Activated CD4-positive, alpha-beta T cell treated with anti-CD3 and anti-CD28 coated beads for 36 hours (primary cell): ENCODE measurements at regions of chr9 and their contacts with region 1.

Region 1: DNA sequence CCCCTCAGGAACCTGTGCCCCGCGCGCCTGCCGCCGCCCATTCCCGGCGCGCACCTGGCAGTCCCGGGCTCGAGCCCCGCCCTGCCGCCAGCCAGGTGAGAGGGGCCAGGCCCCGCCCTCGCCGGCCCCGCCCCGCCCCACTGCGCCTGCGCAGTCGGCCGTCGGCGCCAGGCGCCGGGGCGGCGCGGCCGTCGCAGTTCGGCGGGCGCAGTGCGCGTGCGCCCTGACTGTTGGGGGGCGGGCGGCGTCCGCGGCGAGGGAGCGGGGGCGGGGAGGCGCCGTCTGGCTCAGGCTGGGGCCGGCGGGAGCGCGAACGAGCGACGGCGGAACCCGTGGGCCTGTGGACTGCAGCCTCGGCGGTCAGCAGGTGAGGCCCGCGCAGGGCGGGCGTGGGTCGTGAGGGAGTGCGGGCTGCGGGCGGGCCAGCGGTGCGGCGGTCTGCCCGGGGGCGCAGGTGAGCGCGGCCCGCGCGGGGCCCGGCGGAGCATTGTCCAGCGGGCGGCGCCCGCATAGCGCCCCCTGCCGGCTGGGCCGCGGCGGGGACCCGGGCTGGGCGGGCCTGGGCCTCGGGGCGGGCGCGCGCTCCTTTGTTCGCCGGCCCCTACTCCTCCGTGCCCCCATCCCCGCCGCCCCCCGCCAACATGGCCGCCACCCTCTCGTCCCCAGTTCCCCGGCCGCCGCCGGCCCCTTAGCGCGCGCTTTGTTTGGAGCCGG is at the start of gene SPIN1:
- DNase-seq: peak; percentile 92
- ATAC-seq: peak; percentile 83
- H3K4me3 Mint-ChIP-seq: peak within 1 kb of the TSS; percentile 94
- H3K27ac Mint-ChIP-seq: peak within 1 kb of the TSS; percentile 97
- H3K4me1 Mint-ChIP-seq: peaks cover 40% of the 10 kb centered on the region
- H3K27me3 Mint-ChIP-seq: no peaks in the 10 kb centered on the region
- total RNA-seq, gene SPIN1: 17.9 to 22.1 TPM

Region 2: DNA sequence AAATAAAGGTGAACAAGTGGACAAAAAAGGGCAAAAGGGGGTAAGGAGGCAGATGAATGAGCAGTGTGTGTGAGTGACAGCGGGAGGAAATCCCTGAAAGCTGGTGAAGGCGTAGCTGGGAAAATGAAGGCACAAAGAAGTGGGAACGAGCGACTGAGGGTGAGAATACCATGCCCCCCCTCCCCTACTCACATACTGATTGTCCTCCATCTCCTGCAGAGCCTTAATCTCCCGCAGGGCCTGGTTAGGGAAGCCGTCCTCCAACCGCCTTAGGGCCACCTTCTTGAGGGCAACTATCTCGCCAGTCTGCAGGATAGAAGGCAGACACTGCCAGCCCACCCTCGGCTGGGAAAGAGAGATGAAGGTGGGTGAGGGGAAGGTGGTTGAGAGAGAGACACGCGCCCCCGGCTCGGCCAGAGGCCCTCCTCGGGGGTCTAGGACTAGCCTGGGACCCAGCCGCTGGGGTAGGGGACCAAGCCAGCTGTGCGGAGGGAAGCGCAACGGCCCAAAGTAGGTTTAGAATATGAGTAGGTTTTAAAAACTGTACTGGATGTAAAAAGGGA is 414.5 kb before region 1 on chr9:
- CTCF ChIA-PET with region 1: interaction called, 3 read pairs
- POLR2A ChIA-PET with region 1: no interaction called
- intact Hi-C with region 1: loop called in 1 of 2 experiments (anchors 1 kb)
- DNase-seq: peak; percentile 19
- ATAC-seq: no peak
- H3K4me3 Mint-ChIP-seq: peak overlapping the region; percentile 82
- H3K27ac Mint-ChIP-seq: peak overlapping the region; percentile 58
- H3K4me1 Mint-ChIP-seq: peaks cover 22% of the 10 kb centered on the region
- H3K27me3 Mint-ChIP-seq: no peaks in the 10 kb centered on the region

Region 3: GRCh38 chr9:88173378-88173999 is 214.8 kb before region 1 on chr9:
- CTCF ChIA-PET with region 1: no interaction called
- POLR2A ChIA-PET with region 1: no interaction called
- intact Hi-C with region 1: loop called (anchors 2 to 10 kb)
- DNase-seq: peak; percentile 67
- ATAC-seq: peak; percentile 55
- H3K4me3 Mint-ChIP-seq: no peak overlapping the region
- H3K27ac Mint-ChIP-seq: no peak overlapping the region
- H3K4me1 Mint-ChIP-seq: peaks cover under 1% of the 10 kb centered on the region
- H3K27me3 Mint-ChIP-seq: peaks cover 4% of the 10 kb centered on the region

Region 4: GRCh38 chr9:88310310-88310995 is 77.9 kb before region 1 on chr9:
- CTCF ChIA-PET with region 1: interaction called, 5 read pairs
- POLR2A ChIA-PET with region 1: no interaction called
- intact Hi-C with region 1: loop called (anchors 2 to 5 kb)
- DNase-seq: no peak
- ATAC-seq: no peak
- H3K4me3 Mint-ChIP-seq: no peak overlapping the region
- H3K27ac Mint-ChIP-seq: peak overlapping the region; percentile 25
- H3K4me1 Mint-ChIP-seq: peaks cover 31% of the 10 kb centered on the region
- H3K27me3 Mint-ChIP-seq: peaks cover 6% of the 10 kb centered on the region

Region 5: DNA sequence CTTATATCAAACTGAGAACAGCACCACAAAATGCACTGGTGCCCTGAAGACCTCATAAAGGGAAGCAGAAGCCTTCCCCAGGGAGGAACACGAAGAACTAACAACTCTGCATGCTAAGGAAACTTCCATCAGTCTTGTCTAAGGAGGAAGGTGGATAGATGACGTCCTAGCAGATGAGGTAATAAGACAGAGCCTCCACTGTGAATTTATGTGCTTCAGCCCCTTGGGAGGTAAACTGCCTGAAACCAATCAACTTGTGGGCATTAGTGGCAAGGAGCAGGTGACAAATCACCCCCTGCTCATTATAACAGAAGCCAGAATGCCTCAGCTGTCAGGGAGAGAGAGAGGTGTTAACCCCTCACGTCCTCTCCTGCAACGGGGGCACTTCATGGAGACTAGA is 49.0 kb before region 1 on chr9:
- CTCF ChIA-PET with region 1: no interaction called
- POLR2A ChIA-PET with region 1: no interaction called
- intact Hi-C with region 1: no loop called
- DNase-seq: no peak
- ATAC-seq: no peak
- H3K4me3 Mint-ChIP-seq: no peak overlapping the region
- H3K27ac Mint-ChIP-seq: no peak overlapping the region
- H3K4me1 Mint-ChIP-seq: no peaks in the 10 kb centered on the region
- H3K27me3 Mint-ChIP-seq: no peaks in the 10 kb centered on the region

Region 6: DNA sequence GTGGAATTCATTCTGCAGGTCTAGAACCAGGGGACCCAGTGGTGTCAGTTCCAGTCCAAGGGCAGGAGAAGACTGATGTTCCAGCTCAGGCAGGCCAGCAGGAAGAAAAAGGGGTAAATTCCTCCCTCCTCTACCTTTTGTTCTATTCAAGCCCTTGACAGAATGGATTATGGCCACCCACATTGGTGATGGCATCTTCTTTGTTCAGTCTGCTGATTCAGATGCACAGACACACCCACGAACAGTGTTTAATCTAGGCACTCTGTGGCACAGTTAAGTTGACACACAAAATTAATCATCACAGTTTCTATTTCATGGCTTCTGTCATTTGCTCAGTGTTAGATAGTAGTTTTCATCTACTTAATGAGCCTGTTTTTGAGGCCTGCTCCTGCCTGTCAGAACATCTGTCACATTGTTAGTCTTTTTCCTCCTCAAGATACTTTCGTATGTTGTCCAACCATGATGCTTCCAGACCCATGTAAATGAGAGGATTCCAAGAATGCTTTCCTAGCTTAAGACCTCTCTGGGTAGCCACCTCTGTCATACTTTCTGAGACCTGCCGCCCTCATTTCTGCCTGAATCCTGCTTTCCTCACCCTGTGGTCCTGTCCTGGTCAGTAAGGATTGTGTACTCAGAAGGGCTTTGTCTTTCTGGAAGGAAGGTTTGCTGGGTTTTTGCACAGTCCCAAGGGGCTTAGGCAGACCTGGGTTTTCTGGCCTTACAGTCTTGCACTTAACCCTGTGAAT is 72.4 kb after region 1 on chr9:
- CTCF ChIA-PET with region 1: no interaction called
- POLR2A ChIA-PET with region 1: no interaction called
- intact Hi-C with region 1: loop called in 1 of 2 experiments (anchors 1 kb)
- DNase-seq: peak; percentile 57
- ATAC-seq: peak; percentile 98
- H3K4me3 Mint-ChIP-seq: no peak overlapping the region
- H3K27ac Mint-ChIP-seq: peak overlapping the region; percentile 48
- H3K4me1 Mint-ChIP-seq: peaks cover 12% of the 10 kb centered on the region
- H3K27me3 Mint-ChIP-seq: no peaks in the 10 kb centered on the region

Region 7: DNA sequence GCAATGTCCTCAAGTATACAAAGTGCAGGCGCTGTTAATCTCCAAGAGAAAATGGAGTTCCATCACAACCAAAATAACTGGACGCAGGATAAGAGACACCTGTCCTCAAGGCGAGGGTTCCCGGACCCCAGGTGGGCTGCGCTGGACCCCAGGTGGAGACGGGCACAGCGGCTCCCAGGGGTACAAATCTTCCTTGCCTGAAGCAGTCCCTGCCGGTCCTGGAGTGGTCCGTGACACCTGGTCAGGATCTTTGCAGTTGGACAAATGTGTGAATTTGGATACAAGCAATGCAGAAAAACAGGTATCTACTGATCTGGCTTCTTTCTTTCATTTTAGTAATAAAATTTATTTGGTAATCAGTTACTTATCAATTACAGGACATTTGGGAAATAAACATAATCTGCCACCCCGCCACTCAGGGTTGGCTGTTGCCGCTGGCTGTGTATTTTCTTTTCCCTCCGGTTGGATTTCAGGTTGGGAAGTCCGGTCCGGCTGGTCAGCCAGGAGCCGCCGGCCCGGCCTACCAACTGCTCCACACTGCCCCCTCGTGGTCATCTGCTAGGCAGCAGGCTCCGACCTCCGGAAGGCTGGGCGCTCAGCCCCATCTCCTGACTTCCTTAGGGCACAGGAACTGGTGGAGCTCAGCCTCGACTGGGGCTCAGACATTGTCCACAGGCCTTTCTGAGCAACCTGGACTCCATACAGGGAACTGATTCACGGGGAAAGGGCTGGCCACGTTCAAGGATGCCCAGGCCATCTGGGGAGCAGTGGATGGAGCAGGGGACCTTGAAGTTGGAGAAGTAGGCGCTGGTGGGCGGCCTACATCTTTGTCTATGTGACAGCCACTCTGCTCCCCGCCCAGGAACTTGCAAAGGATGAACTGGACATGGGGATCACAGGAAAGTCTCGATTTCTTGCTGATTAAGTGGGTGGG is 190.1 kb after region 1 on chr9:
- CTCF ChIA-PET with region 1: no interaction called
- POLR2A ChIA-PET with region 1: no interaction called
- intact Hi-C with region 1: loop called in 1 of 2 experiments (anchors 1 kb)
- DNase-seq: peak; percentile 84
- ATAC-seq: peak; percentile 73
- H3K4me3 Mint-ChIP-seq: peak overlapping the region; percentile 31
- H3K27ac Mint-ChIP-seq: no peak overlapping the region
- H3K4me1 Mint-ChIP-seq: no peaks in the 10 kb centered on the region
- H3K27me3 Mint-ChIP-seq: peaks cover 13% of the 10 kb centered on the region